ENCODE measurements at regions of chr12 and their contacts with region 1.

Region 1: DNA sequence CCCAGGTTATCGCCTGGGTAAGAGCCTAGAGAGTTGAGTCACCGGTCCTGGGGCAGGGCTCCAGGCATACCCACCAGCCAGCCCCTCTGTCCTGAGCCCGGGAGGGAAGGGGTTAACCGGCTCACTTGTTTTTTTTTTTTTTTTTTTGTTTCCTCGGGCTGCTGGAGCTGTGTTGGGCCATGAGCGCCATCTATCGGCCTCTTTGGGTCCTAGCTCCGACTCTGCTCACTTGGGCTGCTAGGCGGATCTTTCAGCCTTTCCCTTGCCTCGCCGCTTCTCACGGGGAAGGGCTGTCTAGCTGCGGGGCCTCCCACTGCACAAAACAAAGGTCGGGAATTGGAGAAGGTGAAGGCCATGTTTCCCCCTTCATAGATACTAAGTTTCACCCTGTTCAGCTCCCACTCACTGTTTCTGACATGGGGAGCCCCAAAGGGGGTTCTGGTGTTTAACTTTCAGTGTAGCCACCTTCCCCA is 2.8 kb upstream of the SMUG1 start:
- DNase-seq: no peak
- H3K4me3 ChIP-seq: no peak overlapping the region
- H3K27me3 ChIP-seq: peaks cover 6% of the 10 kb centered on the region
- CTCF ChIP-seq: peak; percentile 92

Region 2: DNA sequence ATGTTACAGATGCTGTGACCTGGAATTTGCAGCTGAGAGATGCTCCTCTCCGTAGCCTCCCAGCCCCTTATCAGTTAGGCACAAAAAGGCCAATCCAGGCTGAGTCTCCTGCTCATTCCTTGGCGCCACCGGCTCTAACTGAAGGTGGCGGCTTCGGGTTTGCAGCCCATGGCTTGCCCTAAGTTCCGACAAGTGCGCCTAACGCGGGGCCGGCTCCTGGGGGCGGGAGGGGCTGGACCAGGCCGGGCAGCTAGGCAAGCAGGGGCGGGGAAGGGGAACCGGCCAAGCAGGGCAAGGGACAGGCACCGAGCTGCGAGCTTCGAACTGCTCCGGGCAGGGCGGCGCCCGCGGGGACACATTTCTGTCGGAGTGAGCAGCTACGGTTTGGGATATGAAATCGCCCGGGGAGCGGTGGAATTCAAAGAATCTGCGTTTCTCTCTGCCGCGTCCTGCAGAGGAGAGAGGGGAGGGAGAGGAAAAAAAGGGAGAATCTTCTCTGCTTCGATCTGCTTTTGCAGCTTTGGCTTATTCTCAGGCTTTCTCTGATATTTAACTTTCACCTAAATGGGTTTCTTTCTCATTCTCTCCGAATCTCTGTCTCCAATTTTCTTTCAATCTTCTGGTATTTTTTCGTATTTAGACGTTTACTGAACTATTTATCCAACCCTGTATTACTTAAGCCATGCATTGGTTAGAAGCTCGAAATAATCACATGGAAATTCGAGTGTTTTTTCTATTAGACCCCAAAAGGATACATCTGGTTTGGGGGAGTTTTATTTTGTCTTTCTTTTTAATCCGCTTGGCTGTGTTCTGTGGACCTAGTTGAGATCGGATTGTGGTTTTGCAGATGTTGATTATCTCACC is 238.5 kb before region 1 on chr12:
- CTCF ChIA-PET with region 1: no interaction called
- POLR2A ChIA-PET with region 1: no interaction called
- DNase-seq: no peak
- H3K4me3 ChIP-seq: no peak overlapping the region
- H3K27me3 ChIP-seq: peaks cover 62% of the 10 kb centered on the region
- CTCF ChIP-seq: no peak

Region 3: DNA sequence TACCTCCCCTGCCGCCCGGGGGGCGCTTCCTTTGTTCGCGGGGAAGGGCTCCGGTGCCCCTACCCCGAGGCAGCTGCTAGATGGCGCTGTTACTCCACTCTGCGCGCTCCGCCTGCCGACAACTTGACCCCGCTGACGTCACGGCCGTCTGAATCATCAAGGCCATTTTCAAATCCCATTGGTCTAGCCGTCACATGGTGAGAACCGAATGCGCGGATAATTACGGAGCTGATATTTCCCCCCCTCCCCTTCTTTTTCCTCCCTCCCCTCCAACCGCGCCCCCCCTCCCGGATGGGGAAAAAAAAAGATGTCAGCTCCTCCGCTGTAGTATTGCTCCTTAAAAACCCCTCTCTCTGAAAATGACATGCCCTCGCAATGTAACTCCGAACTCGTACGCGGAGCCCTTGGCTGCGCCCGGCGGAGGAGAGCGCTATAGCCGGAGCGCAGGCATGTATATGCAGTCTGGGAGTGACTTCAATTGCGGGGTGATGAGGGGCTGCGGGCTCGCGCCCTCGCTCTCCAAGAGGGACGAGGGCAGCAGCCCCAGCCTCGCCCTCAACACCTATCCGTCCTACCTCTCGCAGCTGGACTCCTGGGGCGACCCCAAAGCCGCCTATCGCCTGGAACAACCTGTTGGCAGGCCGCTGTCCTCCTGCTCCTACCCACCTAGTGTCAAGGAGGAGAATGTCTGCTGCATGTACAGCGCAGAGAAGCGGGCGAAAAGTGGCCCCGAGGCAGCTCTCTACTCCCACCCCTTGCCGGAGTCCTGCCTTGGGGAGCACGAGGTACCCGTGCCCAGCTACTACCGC is 206.5 kb before region 1 on chr12 and contains the start of gene HOXC10:
- CTCF ChIA-PET with region 1: interaction called, 11 read pairs
- POLR2A ChIA-PET with region 1: interaction called, 3 read pairs
- DNase-seq: no peak
- H3K4me3 ChIP-seq: peak within 1 kb of the TSS; percentile 60
- H3K27me3 ChIP-seq: peaks cover 2% of the 10 kb centered on the region; the same call in 1 of the 2 replicates
- CTCF ChIP-seq: peak; percentile 83
- polyA plus RNA-seq, gene HOXC10: 13.9 and 14.9 TPM in 2 replicates

Region 4: DNA sequence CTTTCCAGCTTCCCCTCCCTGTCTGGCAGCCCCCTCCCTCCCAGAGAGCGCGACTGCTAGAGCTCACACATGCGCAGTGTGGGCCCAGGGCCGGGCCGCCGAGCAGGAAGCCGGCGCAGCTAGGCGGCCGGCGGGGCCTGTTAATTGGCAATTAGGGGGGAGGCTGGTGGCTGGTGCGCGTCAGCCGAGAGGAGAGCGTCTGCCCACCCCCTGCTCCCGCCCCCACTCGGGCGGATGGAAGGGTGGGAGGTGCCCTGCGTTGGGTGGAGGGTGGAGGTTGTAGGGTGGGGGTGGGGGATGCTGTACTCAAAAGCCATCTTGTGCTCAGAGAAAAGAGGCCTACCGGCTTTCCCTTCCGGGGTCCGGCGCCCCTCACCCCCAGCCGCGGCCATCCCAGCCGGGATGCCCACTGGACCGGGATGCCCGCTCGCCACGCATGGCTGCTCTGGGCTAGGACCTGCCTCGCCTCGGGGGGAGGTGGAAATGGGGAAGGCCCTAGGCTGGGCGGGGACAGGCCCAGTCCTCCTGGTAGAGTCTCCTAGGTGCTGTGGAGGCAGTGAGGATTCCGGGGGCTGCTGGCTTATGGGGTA is 173.6 kb before region 1 on chr12:
- CTCF ChIA-PET with region 1: interaction called, 13 read pairs
- POLR2A ChIA-PET with region 1: no interaction called
- DNase-seq: no peak
- H3K4me3 ChIP-seq: peak overlapping the region; percentile 72
- H3K27me3 ChIP-seq: peaks cover 13% of the 10 kb centered on the region
- CTCF ChIP-seq: no peak

Region 5: GRCh38 chr12:54024127-54024526 is 167.5 kb before region 1 on chr12:
- CTCF ChIA-PET with region 1: interaction called, 13 read pairs
- POLR2A ChIA-PET with region 1: no interaction called
- DNase-seq: no peak
- H3K4me3 ChIP-seq: no peak overlapping the region
- H3K27me3 ChIP-seq: peaks cover 3% of the 10 kb centered on the region; the same call in 1 of the 2 replicates
- CTCF ChIP-seq: no peak

Region 6: DNA sequence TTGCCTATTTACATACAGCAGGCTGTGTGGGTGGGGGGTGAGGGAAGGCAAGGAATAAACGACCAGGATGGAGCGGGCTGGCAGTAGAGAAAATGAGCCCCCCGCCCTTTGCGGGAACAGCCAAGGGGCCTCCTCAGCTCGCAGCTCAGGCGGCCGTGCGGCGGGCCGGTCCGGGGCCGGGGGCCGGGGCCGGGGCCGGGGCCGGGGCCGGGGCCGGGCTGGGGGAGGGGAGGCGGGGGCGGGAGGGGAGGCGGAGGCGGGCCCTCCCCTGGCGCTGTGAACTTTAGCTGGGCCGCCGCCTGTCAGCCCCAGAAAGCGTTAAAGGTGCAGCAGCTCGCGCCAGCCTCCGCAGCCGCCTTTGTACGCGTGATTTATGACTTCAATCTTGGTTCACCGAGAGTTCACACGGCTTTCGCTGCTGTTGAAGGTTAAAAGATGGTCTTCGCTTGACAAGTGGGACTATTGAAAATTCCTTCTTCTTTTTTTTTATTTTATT is 109.1 kb before region 1 on chr12:
- CTCF ChIA-PET with region 1: no interaction called
- POLR2A ChIA-PET with region 1: no interaction called
- DNase-seq: no peak
- H3K4me3 ChIP-seq: no peak overlapping the region
- H3K27me3 ChIP-seq: peaks cover 11% of the 10 kb centered on the region
- CTCF ChIP-seq: no peak

Region 7: DNA sequence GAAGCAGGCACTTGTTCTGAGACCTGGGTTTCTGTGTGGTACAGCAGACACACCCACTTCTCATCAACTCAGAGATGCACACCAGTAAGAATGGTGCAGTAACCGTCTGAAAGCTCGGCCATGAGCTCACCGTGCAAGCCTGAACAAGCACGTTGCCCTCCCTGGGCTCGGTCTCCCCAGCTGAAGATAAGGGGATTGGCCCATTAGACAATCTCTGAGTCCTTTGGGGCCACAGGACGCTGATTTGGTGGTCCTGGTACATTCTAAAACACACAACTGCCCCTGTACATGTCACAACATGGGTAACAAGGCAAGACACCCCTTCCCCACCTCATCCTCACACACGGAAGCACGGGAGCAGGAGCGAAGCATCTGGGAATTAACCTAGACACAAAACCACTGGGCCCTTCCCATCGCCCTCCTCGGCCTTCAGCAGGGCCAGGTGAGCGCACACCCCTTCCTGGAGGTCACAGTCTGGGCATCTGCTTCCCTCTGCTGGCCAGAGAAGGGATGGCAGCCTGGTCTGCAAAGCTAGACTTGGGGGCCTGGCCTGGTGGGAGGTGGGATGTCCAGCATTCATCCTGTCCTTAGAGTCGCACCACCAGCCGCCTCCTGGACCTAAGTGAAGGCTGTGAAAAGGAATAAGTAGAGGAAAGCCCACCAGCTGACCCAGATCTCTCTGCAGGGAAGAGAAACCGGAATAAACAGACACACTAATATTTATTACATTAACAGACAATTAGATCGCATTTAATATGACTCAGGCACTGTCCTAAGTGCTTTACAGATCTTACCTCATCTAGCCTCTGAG is 16.1 kb after region 1 on chr12:
- CTCF ChIA-PET with region 1: interaction called, 42 read pairs
- POLR2A ChIA-PET with region 1: no interaction called
- DNase-seq: no peak
- H3K4me3 ChIP-seq: no peak overlapping the region
- H3K27me3 ChIP-seq: peaks cover 14% of the 10 kb centered on the region
- CTCF ChIP-seq: peak; percentile 98